ENCODE measurements at regions of chr12 and their contacts with region 1.

Region 1: GRCh38 chr12:6867413-6868210 is at the start of gene TPI1:
- DNase-seq: peak; percentile 84
- H3K27ac ChIP-seq: peak within 1 kb of the TSS; percentile 84
- CTCF ChIP-seq: no peak

Region 2: DNA sequence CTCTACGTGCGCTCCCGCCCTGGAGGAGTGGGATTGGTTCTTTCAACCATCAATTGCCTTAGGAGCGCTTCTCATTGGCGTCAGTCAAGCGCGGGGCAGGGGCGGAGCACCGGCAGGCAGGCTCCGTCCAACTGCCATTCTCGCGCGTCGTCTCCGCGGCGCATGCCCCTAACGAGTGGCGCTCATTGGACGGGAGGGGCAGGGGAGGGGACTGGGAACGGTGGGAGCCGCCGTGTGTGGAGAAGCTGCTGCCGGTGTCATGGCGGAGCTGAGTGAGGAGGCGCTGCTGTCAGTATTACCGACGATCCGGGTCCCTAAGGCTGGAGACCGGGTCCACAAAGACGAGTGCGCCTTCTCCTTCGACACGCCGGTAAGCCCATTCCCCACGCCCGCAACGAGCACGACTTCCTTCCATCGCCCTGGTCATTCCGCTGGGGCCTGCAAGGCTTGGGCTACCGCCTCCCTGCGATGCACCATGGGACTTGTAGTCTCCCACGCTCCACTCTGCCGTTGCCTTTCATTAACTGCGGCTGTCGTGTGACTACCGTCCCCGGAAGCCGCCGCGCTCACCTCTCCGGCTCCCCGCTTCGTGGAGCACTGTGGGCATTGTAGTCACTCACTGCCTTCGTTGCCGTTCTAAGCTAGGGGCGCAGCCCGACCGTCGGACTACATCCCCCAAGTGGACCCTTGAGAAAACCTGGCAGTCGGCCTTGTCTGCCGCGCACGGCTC is 15.5 kb before region 1 on chr12 and contains the start of gene USP5:
- CTCF ChIA-PET with region 1: interaction called, 7 read pairs
- POLR2A ChIA-PET with region 1: interaction called, 13 read pairs
- DNase-seq: peak; percentile 98
- H3K27ac ChIP-seq: peak within 1 kb of the TSS; percentile 85
- CTCF ChIP-seq: no peak

Region 3: GRCh38 chr12:6890789-6891645 is 23.4 kb after region 1 on chr12:
- CTCF ChIA-PET with region 1: interaction called, 16 read pairs
- POLR2A ChIA-PET with region 1: interaction called, 9 read pairs
- DNase-seq: peak; percentile 91
- H3K27ac ChIP-seq: peak overlapping the region; percentile 77
- CTCF ChIP-seq: peak; percentile 75